HEK293 (cell line): ENCODE measurements at regions of chr11 and their contacts with region 1.

Region 1: GRCh38 chr11:57249384-57250319 is 12.6 kb upstream of the APLNR start:
- H3K4me3 ChIP-seq: no peak overlapping the region
- H3K27ac ChIP-seq: no peak overlapping the region
- H3K4me1 ChIP-seq: no peaks in the 10 kb centered on the region
- CTCF ChIP-seq: peak; percentile 37; the same call in 1 of the 2 replicates

Region 2: GRCh38 chr11:57116654-57117053 is 133.0 kb before region 1 on chr11:
- CTCF ChIA-PET with region 1: interaction called, 244 read pairs
- POLR2A ChIA-PET with region 1: no interaction called
- H3K4me3 ChIP-seq: no peak overlapping the region
- H3K27ac ChIP-seq: no peak overlapping the region
- H3K4me1 ChIP-seq: no peaks in the 10 kb centered on the region
- CTCF ChIP-seq: no peak

Region 3: GRCh38 chr11:57150454-57150917 is 99.2 kb before region 1 on chr11:
- CTCF ChIA-PET with region 1: interaction called, 16 read pairs
- POLR2A ChIA-PET with region 1: no interaction called
- H3K4me3 ChIP-seq: no peak overlapping the region
- H3K27ac ChIP-seq: no peak overlapping the region
- H3K4me1 ChIP-seq: no peaks in the 10 kb centered on the region
- CTCF ChIP-seq: no peak

Region 4: DNA sequence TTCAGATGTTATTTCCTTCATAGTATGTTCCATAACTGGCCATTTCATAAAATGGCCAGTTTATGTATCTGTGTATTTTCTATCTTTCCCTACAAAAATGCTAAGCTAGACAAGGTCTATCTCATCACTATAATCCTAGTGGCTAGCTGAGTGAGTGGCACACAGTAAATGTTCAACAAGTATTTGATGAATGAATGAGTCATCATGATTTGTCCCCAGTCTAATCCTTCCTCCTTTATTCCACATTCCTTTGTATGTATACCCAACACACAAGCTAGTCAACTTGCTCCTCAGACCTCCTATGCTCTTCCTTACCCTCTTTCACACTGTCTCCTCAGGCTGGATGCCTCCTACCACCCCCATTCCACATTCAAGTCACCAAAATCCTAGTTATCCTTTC is 25.1 kb before region 1 on chr11:
- CTCF ChIA-PET with region 1: interaction called, 19 read pairs
- POLR2A ChIA-PET with region 1: no interaction called
- H3K4me3 ChIP-seq: no peak overlapping the region
- H3K27ac ChIP-seq: no peak overlapping the region
- H3K4me1 ChIP-seq: no peaks in the 10 kb centered on the region
- CTCF ChIP-seq: no peak

Region 5: GRCh38 chr11:57269571-57270021 is 19.9 kb after region 1 on chr11:
- CTCF ChIA-PET with region 1: interaction called, 68 read pairs
- POLR2A ChIA-PET with region 1: no interaction called
- H3K4me3 ChIP-seq: no peak overlapping the region
- H3K27ac ChIP-seq: no peak overlapping the region
- H3K4me1 ChIP-seq: no peaks in the 10 kb centered on the region
- CTCF ChIP-seq: no peak